ENCODE measurements at regions of chr3 and their contacts with region 1.

Region 1: DNA sequence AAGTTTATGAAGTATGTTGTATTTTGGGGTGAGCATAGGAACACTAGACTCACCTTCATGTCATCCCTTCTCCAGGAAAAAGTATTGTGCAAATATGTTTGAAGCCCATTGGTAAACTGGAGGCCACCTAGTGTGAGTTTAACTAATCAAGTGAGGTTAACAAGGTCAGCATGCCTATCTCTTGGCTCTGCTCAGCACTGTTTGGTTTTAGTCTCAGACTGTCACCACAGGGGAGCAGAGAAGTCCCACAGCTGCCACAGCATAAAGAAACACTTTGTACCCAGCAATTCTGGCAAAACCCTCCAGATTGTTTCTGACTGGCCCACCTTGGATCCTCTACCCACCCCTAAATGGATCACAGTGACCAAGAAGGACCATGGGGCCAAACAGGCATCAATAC is 152.7 kb downstream of the FEZF2 start:
- DNase-seq: no peak
- ATAC-seq: no peak
- H3K4me3 ChIP-seq: no peak overlapping the region
- H3K27ac ChIP-seq: no peak overlapping the region
- H3K4me1 ChIP-seq: no peaks in the 10 kb centered on the region
- H3K27me3 ChIP-seq: no peaks in the 10 kb centered on the region
- CTCF ChIP-seq: no peak
- POLR2A ChIP-seq: no peak

Region 2: DNA sequence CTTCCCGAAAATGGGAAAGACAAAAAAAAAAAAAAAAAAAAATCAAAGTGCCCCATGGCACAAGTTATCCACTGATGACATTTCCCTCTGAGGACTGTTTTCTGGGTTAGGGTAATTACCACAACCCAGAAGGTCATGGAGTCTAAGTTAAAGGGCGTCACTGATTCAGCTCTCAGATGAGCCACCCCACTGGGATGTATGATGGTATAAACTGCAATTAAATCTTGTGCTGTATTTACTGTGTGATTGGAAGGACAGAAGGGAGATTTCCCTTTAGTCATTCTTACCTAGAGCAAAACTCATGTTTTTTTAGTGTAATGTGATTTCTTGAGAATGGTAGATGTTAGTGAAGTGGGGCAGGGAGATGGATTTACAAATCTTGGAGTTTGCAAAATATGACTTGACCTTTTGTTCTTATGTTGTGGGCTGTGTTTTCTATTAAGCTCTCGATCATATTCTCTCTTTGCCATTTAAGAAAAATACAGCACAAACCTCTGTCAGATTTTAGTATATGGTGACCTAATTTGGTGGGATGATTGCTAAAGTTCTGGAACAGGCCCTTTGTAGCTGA is 415.0 kb before region 1 on chr3:
- in situ Hi-C with region 1: no loop called
- intact Hi-C with region 1: no loop called
- DNase-seq: no peak
- ATAC-seq: peak; percentile 10 to 11
- H3K4me3 ChIP-seq: no peak overlapping the region
- H3K27ac ChIP-seq: peak overlapping the region; percentile 16 to 73 (median 48)
- H3K4me1 ChIP-seq: peaks cover 67 to 77% of the 10 kb centered on the region in 2 donors
- H3K27me3 ChIP-seq: no peaks in the 10 kb centered on the region
- CTCF ChIP-seq: no peak
- POLR2A ChIP-seq: no peak

Region 3: GRCh38 chr3:62312201-62312600 is 91.6 kb after region 1 on chr3:
- in situ Hi-C with region 1: no loop called
- intact Hi-C with region 1: loop called (anchors 5 kb)
- DNase-seq: no peak
- ATAC-seq: no peak
- H3K4me3 ChIP-seq: no peak overlapping the region
- H3K27ac ChIP-seq: no peak overlapping the region
- H3K4me1 ChIP-seq: no peaks in the 10 kb centered on the region
- H3K27me3 ChIP-seq: no peaks in the 10 kb centered on the region
- CTCF ChIP-seq: no peak
- POLR2A ChIP-seq: no peak

Region 4: GRCh38 chr3:62436785-62437184 is 216.2 kb after region 1 on chr3:
- in situ Hi-C with region 1: no loop called
- intact Hi-C with region 1: no loop called
- DNase-seq: no peak
- ATAC-seq: no peak
- H3K4me3 ChIP-seq: no peak overlapping the region
- H3K27ac ChIP-seq: no peak overlapping the region
- H3K4me1 ChIP-seq: no peaks in the 10 kb centered on the region
- H3K27me3 ChIP-seq: peaks cover 0 to 4% (median 0%) of the 10 kb centered on the region in 3 donors
- CTCF ChIP-seq: no peak
- POLR2A ChIP-seq: no peak

Measured in gastrocnemius medialis (tissue), 4 donors.